HCT116 (cell line): ENCODE measurements at regions of chr3 and their contacts with region 1.

Region 1: DNA sequence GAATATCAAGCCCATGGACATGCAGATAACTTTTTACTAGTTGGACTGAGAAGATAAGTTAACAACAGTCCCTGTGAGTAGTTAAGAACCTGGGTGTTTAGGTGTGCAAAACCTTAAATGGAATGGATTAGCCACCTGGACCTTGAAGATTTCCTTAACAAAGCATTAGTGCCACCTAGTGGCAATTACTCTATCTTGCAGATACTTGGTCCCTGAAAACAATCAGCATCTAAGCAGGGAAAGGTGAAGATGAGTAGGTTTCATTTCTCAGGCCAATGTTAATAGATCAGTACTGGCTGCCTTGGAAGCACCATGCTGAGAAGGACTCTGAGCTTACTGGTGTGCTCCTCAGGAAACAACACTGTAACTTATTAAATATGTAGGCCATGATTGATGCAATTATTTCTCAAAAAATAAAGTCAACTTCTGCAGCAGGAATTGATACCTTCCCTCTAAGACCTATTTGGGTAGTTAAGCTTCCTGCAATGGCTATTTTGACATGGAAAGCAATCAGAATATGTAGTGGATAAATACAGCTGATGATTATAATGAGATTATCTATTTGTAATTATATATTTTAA is 329.4 kb downstream of the TBC1D5 start:
- DNase-seq: peak; percentile 56
- ATAC-seq: peak; percentile 84
- H3K4me3 ChIP-seq: no peak overlapping the region
- H3K27ac ChIP-seq: no peak overlapping the region
- H3K4me1 ChIP-seq: no peaks in the 10 kb centered on the region
- H3K27me3 ChIP-seq: no peaks in the 10 kb centered on the region
- CTCF ChIP-seq: peak; percentile 66 to 83 (median 74); a peak in 5 of 6 replicates
- POLR2A ChIP-seq: no peak
- RAD21 ChIP-seq: peak; percentile 82

Region 2: DNA sequence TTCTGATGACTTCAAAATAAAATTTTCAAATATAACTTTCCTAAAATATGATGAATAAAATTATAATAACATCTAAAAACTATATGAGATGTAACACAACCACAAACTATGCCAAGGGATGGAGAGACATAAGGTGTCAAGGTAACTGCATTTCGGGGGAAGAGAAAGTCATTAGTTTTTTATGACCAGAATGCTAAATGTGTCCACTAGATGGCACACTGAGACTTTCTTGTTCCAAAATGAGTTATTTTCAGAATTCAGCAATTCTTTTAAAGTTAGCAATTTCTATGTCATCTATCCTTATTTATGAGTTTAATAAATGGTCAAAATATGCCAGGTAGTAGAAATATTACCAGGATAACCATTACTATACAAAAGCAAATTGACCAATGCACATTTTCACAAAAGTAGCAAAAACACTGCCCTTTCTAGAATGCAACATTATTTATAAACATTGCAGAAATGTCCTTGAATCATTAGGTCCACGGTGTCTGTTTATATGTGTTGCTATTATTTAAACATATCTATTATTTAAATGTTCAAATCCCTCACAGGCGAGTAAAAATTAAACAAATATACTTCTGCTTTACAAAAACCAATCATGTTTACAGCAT is 154.1 kb before region 1 on chr3:
- CTCF ChIA-PET with region 1: interaction called, 4 read pairs
- POLR2A ChIA-PET with region 1: no interaction called
- RAD21 ChIA-PET with region 1: no interaction called
- intact Hi-C with region 1: loop called (anchors 1 kb)
- DNase-seq: peak; percentile 13
- ATAC-seq: no peak
- H3K4me3 ChIP-seq: no peak overlapping the region
- H3K27ac ChIP-seq: no peak overlapping the region
- H3K4me1 ChIP-seq: no peaks in the 10 kb centered on the region
- H3K27me3 ChIP-seq: no peaks in the 10 kb centered on the region
- CTCF ChIP-seq: peak; percentile 46 to 69 (median 69); a peak in 5 of 6 replicates
- POLR2A ChIP-seq: no peak
- RAD21 ChIP-seq: peak; percentile 68

Region 3: DNA sequence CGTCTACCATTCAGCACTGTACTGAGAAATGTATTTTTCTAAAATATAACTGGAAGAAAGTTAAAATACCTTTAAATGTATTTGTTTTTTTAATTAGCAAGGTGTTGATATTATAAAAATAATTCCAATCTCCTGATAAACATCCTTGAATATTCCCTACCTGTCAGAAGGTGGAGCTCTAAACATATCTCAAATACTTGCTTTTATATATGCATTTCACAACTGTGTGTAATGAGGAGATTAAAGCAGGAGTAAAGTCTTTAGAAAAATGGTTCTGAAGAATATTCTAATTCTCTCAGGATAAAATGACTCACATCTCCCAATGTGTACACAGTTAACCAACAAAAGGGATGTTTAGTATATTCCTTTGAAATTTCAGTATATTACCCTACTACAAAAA is 105.6 kb before region 1 on chr3:
- CTCF ChIA-PET with region 1: interaction called, 6 read pairs
- POLR2A ChIA-PET with region 1: no interaction called
- RAD21 ChIA-PET with region 1: no interaction called
- intact Hi-C with region 1: loop called (anchors 2 kb)
- DNase-seq: no peak
- ATAC-seq: no peak
- H3K4me3 ChIP-seq: no peak overlapping the region
- H3K27ac ChIP-seq: no peak overlapping the region
- H3K4me1 ChIP-seq: no peaks in the 10 kb centered on the region
- H3K27me3 ChIP-seq: no peaks in the 10 kb centered on the region
- CTCF ChIP-seq: peak; percentile 4 to 31 (median 22); a peak in 3 of 6 replicates
- POLR2A ChIP-seq: no peak
- RAD21 ChIP-seq: peak; percentile 43

Region 4: GRCh38 chr3:18061737-18062656 is 649.0 kb after region 1 on chr3:
- CTCF ChIA-PET with region 1: no interaction called
- POLR2A ChIA-PET with region 1: no interaction called
- RAD21 ChIA-PET with region 1: no interaction called
- intact Hi-C with region 1: no loop called
- DNase-seq: no peak
- ATAC-seq: peak; percentile 58
- H3K4me3 ChIP-seq: no peak overlapping the region
- H3K27ac ChIP-seq: no peak overlapping the region
- H3K4me1 ChIP-seq: peaks cover 0 to 13% of the 10 kb centered on the region in 2 experiments; a peak in 2 of 4 replicates
- H3K27me3 ChIP-seq: no peaks in the 10 kb centered on the region
- CTCF ChIP-seq: no peak
- POLR2A ChIP-seq: no peak
- RAD21 ChIP-seq: no peak